Activated B cell treated with CpG ODN at 0.5 μM for 24 hours (primary cell): ENCODE measurements at regions of chr6 and their contacts with region 1.

Region 1: DNA sequence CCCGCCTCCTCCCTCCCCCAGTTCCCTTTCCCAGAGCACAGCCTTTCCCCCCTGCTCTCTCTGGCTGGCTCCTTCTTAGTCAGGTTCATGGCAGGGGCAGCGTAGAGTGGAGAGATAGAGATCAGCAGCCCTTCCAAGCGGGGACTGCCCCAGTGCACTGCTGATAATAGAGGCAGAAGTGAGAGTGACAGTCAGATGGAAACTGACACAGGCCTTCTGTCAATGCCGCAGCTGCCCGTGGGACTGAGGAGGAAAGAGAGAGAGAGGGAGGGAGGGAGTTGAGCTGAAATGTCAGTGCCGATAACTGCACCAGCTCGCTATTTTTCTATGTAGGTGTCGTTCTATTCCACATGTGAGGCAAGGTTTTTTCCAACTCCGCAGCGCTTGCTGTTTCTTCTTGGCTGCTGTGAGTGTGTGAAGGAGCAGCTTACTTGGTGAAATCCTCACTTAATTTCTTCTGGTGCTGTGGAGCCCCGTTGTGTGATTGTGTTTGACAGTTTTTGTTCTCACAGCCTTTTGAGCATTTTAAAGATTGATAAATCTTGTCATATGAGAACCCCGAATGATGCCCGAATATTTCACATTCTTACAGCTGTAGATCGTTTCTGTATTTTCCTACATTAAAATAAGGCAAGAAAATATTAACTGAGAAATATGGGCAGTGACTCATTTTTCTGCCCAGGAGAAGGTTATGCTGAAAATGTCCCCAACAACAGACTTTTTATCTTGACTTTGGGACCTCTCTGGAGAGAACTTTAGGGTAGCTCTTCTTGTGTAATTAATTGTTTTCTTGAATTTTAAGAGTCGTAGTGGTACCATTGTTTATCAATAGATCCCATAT is 386.4 kb upstream of the MMS22L start:
- DNase-seq: peak; percentile 28
- ATAC-seq: peak; percentile 95
- H3K4me3 Mint-ChIP-seq: no peak overlapping the region
- H3K27ac Mint-ChIP-seq: no peak overlapping the region
- H3K4me1 Mint-ChIP-seq: no peaks in the 10 kb centered on the region
- H3K27me3 Mint-ChIP-seq: no peaks in the 10 kb centered on the region
- CTCF ChIP-seq: no peak

Region 2: DNA sequence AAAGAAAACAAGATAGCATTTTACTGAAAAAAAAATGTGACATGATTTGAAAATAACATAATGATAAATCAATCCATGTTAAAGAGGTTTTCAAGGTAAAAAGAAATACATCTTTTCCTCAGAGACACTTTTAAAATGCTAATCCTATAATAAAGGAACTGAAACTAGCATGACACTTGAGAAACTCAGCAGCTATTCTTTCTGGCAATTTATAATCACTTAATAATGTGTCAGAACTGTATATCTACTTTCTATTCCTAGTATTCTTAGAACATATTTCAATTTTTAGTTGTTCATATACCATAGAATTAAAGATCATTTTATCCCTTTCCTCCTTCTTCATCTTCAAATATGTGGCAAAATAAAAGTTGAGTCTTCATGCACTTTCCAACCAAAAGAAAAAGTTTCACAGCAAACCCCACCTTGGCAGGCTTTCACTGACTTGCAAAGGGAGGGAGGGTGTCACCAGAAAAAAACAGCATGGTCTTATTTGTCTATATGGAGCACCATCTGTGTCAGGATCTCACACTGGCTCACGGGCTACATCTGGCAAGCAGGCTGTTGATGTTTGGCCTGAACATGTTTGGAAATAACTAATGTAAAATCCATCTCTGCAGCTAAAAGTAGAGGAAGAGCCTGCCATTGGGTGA is 1057.9 kb before region 1 on chr6:
- CTCF ChIA-PET with region 1: no interaction called
- POLR2A ChIA-PET with region 1: no interaction called
- intact Hi-C with region 1: loop called (anchors 10 kb)
- DNase-seq: no peak
- ATAC-seq: peak; percentile 47
- H3K4me3 Mint-ChIP-seq: no peak overlapping the region
- H3K27ac Mint-ChIP-seq: no peak overlapping the region
- H3K4me1 Mint-ChIP-seq: peaks cover 28% of the 10 kb centered on the region
- H3K27me3 Mint-ChIP-seq: peaks cover 6% of the 10 kb centered on the region
- CTCF ChIP-seq: no peak

Region 3: GRCh38 chr6:97689078-97689754 is 19.8 kb after region 1 on chr6:
- CTCF ChIA-PET with region 1: no interaction called
- POLR2A ChIA-PET with region 1: no interaction called
- intact Hi-C with region 1: loop called (anchors 2 kb)
- DNase-seq: no peak
- ATAC-seq: no peak
- H3K4me3 Mint-ChIP-seq: no peak overlapping the region
- H3K27ac Mint-ChIP-seq: no peak overlapping the region
- H3K4me1 Mint-ChIP-seq: no peaks in the 10 kb centered on the region
- H3K27me3 Mint-ChIP-seq: no peaks in the 10 kb centered on the region
- CTCF ChIP-seq: no peak